Activated CD8-positive, alpha-beta T cell treated with anti-CD3 and anti-CD28 coated beads for 36 hours (primary cell): ENCODE measurements at regions of chr16 and their contacts with region 1.

Region 1: DNA sequence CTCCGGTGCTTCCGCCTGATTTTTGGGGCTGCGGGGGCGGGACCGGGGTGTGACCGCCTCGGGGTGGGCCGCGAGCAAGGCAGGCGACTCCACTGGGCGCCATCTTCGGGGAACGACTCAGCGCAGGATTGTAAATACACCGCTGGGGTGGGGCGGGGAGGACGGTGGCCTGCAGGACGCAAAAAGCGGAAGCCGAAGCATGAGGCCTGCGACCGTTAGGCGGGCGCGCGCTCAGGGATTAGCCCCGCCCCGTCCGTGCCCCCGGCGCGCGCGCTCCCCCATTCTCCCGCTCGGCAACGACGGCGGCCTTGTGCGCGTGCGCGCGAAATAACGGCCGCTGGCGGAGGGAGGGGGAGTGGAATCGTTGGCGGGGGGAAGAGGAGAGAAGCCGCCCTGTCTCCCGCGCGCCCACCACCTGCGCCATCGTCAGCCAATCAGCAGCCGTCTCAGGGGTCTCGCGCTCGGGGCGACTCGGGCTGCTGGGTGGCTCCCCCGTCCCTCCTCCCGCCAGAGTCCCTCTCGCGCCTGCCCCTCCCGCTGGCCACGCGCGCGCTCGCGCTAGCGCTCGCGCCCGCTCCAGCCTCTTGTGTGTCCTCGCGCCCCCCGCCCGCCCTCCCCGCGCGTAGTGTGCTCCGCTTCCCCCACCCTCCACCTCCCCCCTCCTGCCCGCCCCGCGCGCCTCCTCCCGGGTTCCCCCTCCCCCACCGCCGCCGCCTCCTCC is 791 bp upstream of the MAZ start:
- DNase-seq: peak; percentile 99
- ATAC-seq: peak; percentile 74
- H3K4me3 Mint-ChIP-seq: peak overlapping the region; percentile 90
- H3K27ac Mint-ChIP-seq: peak overlapping the region; percentile 96
- H3K4me1 Mint-ChIP-seq: peaks cover 27% of the 10 kb centered on the region
- H3K27me3 Mint-ChIP-seq: no peaks in the 10 kb centered on the region
- CTCF ChIP-seq: no peak

Region 2: DNA sequence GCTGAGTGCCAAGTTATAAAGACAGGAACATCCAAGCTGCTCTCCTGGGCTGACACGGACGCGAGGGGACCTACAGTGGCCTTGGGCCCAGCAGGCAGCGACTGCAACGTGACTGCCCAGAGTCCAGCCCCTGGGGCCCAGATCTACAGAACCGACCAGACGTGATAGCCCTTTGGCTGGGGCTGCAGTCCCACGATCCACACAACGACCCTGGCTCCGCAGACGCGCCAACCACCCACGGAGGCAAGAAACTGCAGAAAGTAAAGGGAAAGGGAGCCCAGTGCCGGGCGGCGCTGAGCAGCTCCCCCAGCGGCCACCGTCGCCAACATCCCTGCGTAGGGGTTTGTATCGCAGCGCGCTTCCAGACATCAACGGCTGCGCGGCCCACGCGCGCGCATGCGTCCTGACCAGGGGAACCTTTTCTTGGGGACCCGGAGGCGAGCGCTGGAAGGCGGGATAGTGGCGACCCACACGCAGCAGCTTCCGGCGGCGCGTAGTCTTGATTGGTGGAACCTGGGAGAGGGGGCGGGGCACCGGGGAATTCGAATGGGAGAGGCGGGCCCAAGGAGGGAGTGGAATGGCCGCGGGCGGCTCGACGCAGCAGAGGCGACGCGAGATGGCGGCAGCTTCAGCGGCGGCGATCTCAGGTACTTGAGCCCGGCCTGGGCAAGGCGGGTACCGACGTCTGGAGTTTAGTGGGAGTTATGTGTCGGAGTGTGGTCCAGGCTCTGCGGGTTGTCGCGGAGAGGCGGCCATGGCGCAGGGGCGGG is 15.2 kb before region 1 on chr16 and contains the start of gene KIF22:
- CTCF ChIA-PET with region 1: interaction called, 18 read pairs
- POLR2A ChIA-PET with region 1: interaction called, 89 read pairs
- intact Hi-C with region 1: no loop called
- DNase-seq: peak; percentile 100
- ATAC-seq: peak; percentile 97
- H3K4me3 Mint-ChIP-seq: peak within 1 kb of the TSS; percentile 100
- H3K27ac Mint-ChIP-seq: peak within 1 kb of the TSS; percentile 97
- H3K4me1 Mint-ChIP-seq: peaks cover 41% of the 10 kb centered on the region
- H3K27me3 Mint-ChIP-seq: no peaks in the 10 kb centered on the region
- CTCF ChIP-seq: peak; percentile 69
- total RNA-seq, gene KIF22: 160 to 165 TPM

Region 3: GRCh38 chr16:29815793-29816693 is 10.5 kb after region 1 on chr16 and contains the start of gene PAGR1:
- CTCF ChIA-PET with region 1: interaction called, 63 read pairs
- POLR2A ChIA-PET with region 1: interaction called, 167 read pairs
- intact Hi-C with region 1: no loop called
- DNase-seq: peak; percentile 99
- ATAC-seq: peak; percentile 74
- H3K4me3 Mint-ChIP-seq: peak within 1 kb of the TSS; percentile 98
- H3K27ac Mint-ChIP-seq: peak within 1 kb of the TSS; percentile 95
- H3K4me1 Mint-ChIP-seq: peaks cover 69% of the 10 kb centered on the region
- H3K27me3 Mint-ChIP-seq: no peaks in the 10 kb centered on the region
- CTCF ChIP-seq: peak; percentile 94
- total RNA-seq, gene PAGR1: 26.8 to 29.0 TPM

Region 4: GRCh38 chr16:29825145-29826044 is 19.9 kb after region 1 on chr16:
- CTCF ChIA-PET with region 1: interaction called, 63 read pairs
- POLR2A ChIA-PET with region 1: interaction called, 167 read pairs
- intact Hi-C with region 1: no loop called
- DNase-seq: peak; percentile 76
- ATAC-seq: peak; percentile 60
- H3K4me3 Mint-ChIP-seq: peak overlapping the region; percentile 22
- H3K27ac Mint-ChIP-seq: peak overlapping the region; percentile 87
- H3K4me1 Mint-ChIP-seq: peaks cover 75% of the 10 kb centered on the region
- H3K27me3 Mint-ChIP-seq: no peaks in the 10 kb centered on the region
- CTCF ChIP-seq: no peak

Region 5: GRCh38 chr16:29943846-29944669 is 138.5 kb after region 1 on chr16:
- CTCF ChIA-PET with region 1: no interaction called
- POLR2A ChIA-PET with region 1: no interaction called
- intact Hi-C with region 1: no loop called
- DNase-seq: no peak
- ATAC-seq: no peak
- H3K4me3 Mint-ChIP-seq: no peak overlapping the region
- H3K27ac Mint-ChIP-seq: no peak overlapping the region
- H3K4me1 Mint-ChIP-seq: no peaks in the 10 kb centered on the region
- H3K27me3 Mint-ChIP-seq: no peaks in the 10 kb centered on the region
- CTCF ChIP-seq: no peak

Region 6: GRCh38 chr16:30010844-30011713 is 205.5 kb after region 1 on chr16 and contains the start of gene DOC2A:
- CTCF ChIA-PET with region 1: no interaction called
- POLR2A ChIA-PET with region 1: no interaction called
- intact Hi-C with region 1: no loop called
- DNase-seq: peak; percentile 48
- ATAC-seq: peak; percentile 69
- H3K4me3 Mint-ChIP-seq: peak within 1 kb of the TSS; percentile 72
- H3K27ac Mint-ChIP-seq: no peak within 1 kb of the TSS
- H3K4me1 Mint-ChIP-seq: peaks cover 11% of the 10 kb centered on the region
- H3K27me3 Mint-ChIP-seq: peaks cover 18% of the 10 kb centered on the region
- CTCF ChIP-seq: no peak
- total RNA-seq, gene DOC2A: 0.68 to 1.8 TPM